ENCODE measurements at regions of chr17 and their contacts with region 1.

Region 1: DNA sequence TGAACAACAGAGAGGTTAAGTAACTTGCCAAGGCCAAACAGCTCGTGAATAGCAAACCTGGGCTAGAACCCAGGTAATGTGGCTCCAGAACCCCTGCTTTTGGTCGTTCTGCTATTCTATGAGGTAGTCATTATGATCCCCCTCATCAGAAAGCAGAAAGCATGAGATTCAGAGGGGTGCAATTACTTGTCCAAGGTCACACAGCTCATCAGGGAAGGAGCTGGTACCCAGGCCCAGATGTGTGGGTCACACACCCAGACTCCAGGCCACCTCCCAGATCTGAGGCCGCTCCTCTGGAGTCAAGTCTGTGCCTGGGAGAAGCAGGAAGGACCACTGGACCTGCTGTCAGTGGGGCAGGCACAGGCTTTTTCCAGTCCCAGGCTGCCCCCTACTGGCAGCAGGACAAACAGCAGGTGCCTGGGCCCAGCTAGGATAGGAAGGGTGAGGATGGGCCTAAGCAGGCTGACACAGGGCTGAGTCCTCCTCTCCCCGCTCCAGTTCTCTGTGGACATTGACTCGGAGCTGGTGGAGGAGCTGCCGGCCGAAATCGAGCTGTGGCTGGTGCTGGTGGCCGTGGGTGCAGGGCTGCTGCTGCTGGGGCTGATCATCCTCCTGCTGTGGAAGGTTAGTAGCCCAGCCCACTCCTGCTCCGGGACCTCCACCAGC is 7.8 kb upstream of the PDK2 start:
- DNase-seq: peak; percentile 84
- ATAC-seq: peak; percentile 84
- H3K4me3 Mint-ChIP-seq: no peak overlapping the region
- H3K27ac Mint-ChIP-seq: no peak overlapping the region
- H3K4me1 Mint-ChIP-seq: no peaks in the 10 kb centered on the region
- H3K27me3 Mint-ChIP-seq: no peaks in the 10 kb centered on the region

Region 2: GRCh38 chr17:50026901-50027630 is 60.3 kb before region 1 on chr17:
- CTCF ChIA-PET with region 1: interaction called, 91 read pairs
- POLR2A ChIA-PET with region 1: no interaction called
- DNase-seq: peak; percentile 79
- ATAC-seq: peak; percentile 78
- H3K4me3 Mint-ChIP-seq: peak overlapping the region; percentile 38
- H3K27ac Mint-ChIP-seq: no peak overlapping the region
- H3K4me1 Mint-ChIP-seq: peaks cover 15% of the 10 kb centered on the region
- H3K27me3 Mint-ChIP-seq: peaks cover 19% of the 10 kb centered on the region

Region 3: GRCh38 chr17:50055426-50056230 is 31.8 kb before region 1 on chr17 and contains the start of gene ITGA3:
- CTCF ChIA-PET with region 1: interaction called, 30 read pairs
- POLR2A ChIA-PET with region 1: interaction called, 3 read pairs
- DNase-seq: peak; percentile 71
- ATAC-seq: peak; percentile 72
- H3K4me3 Mint-ChIP-seq: peak within 1 kb of the TSS; percentile 85
- H3K27ac Mint-ChIP-seq: peak within 1 kb of the TSS; percentile 79
- H3K4me1 Mint-ChIP-seq: peaks cover 41% of the 10 kb centered on the region
- H3K27me3 Mint-ChIP-seq: no peaks in the 10 kb centered on the region
- total RNA-seq, gene ITGA3: 7.9 to 8.7 TPM

Region 4: GRCh38 chr17:50071692-50072486 is 15.5 kb before region 1 on chr17:
- CTCF ChIA-PET with region 1: interaction called, 17 read pairs
- POLR2A ChIA-PET with region 1: interaction called, 3 read pairs
- DNase-seq: no peak
- ATAC-seq: peak; percentile 44
- H3K4me3 Mint-ChIP-seq: no peak overlapping the region
- H3K27ac Mint-ChIP-seq: no peak overlapping the region
- H3K4me1 Mint-ChIP-seq: peaks cover 4% of the 10 kb centered on the region
- H3K27me3 Mint-ChIP-seq: no peaks in the 10 kb centered on the region

Region 5: DNA sequence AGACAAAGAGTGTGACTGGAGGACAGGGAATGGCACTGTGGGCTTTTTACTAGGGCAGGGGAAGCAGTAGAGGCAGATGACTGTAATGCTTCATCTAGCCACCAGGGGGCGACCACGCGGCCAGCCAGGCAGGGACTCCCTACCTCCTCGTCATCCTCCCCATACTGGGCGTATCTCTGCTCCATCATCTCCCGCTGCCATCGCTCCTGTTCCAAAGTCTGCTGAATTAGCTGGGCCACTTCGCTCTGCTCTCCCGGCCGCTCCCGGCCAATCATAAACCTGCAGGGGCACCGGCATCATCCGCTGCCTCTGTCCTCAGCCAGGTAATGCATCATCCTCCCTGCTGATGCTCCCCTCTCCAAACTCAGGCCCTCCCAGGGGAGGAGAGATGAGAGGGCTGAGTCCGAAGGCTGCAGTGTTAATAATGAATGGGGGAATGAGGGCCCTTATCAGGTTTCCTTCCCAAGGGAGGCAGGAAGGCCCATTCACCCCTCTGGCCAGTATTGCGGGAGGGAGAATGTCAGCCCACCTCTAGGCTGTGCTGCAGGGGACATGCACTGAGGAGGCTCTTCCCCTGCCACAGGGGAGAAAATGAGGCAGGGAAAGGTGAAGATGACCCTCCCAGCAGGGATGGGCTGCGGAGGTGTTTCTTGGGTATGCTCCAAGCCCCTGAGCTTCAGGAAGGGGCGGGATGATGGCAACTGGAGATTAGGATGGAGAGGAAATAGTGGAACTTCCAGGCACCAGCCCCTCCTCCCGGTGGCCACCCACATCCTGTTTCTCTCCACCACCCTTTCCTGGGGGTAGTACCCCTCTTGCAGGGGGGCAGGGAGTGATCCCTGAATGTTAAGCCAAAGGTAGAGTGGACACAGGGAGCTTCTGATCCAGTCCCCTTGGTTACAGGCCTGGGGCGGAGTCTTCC is 52.8 kb after region 1 on chr17:
- CTCF ChIA-PET with region 1: no interaction called
- POLR2A ChIA-PET with region 1: no interaction called
- DNase-seq: peak; percentile 88
- ATAC-seq: peak; percentile 90
- H3K4me3 Mint-ChIP-seq: peak overlapping the region; percentile 62
- H3K27ac Mint-ChIP-seq: peak overlapping the region; percentile 90
- H3K4me1 Mint-ChIP-seq: peaks cover 62% of the 10 kb centered on the region
- H3K27me3 Mint-ChIP-seq: no peaks in the 10 kb centered on the region

Region 6: GRCh38 chr17:50181591-50182560 is 94.5 kb after region 1 on chr17:
- CTCF ChIA-PET with region 1: no interaction called
- POLR2A ChIA-PET with region 1: no interaction called
- DNase-seq: no peak
- ATAC-seq: no peak
- H3K4me3 Mint-ChIP-seq: no peak overlapping the region
- H3K27ac Mint-ChIP-seq: peak overlapping the region; percentile 16
- H3K4me1 Mint-ChIP-seq: peaks cover 30% of the 10 kb centered on the region
- H3K27me3 Mint-ChIP-seq: no peaks in the 10 kb centered on the region

Region 7: GRCh38 chr17:50213026-50214022 is 125.9 kb after region 1 on chr17:
- CTCF ChIA-PET with region 1: no interaction called
- POLR2A ChIA-PET with region 1: no interaction called
- DNase-seq: peak; percentile 68
- ATAC-seq: peak; percentile 86
- H3K4me3 Mint-ChIP-seq: no peak overlapping the region
- H3K27ac Mint-ChIP-seq: peak overlapping the region; percentile 70
- H3K4me1 Mint-ChIP-seq: peaks cover 10% of the 10 kb centered on the region
- H3K27me3 Mint-ChIP-seq: peaks cover 53% of the 10 kb centered on the region

Measured in activated CD8-positive, alpha-beta T cell treated with anti-CD3 and anti-CD28 coated beads, Interleukin-2, amount 10 ng/mL, durations not matched to agents 7 days and 5 days (primary cell).